ENCODE measurements at regions of chr6 and their contacts with region 1.

Region 1: GRCh38 chr6:29942275-29943052 is at the start of gene HLA-A:
- DNase-seq: peak; percentile 79
- ATAC-seq: peak; percentile 90
- H3K4me3 Mint-ChIP-seq: peak within 1 kb of the TSS; percentile 92
- H3K27ac Mint-ChIP-seq: peak within 1 kb of the TSS; percentile 100
- H3K4me1 Mint-ChIP-seq: peaks cover 69% of the 10 kb centered on the region
- H3K27me3 Mint-ChIP-seq: no peaks in the 10 kb centered on the region
- CTCF ChIP-seq: no peak
- total RNA-seq, gene HLA-A: 1,592 and 1,608 TPM in 2 replicates

Region 2: GRCh38 chr6:29752451-29753308 is 189.8 kb before region 1 on chr6:
- CTCF ChIA-PET with region 1: no interaction called
- POLR2A ChIA-PET with region 1: interaction called, 4 read pairs
- intact Hi-C with region 1: loop called (anchors 1 kb)
- DNase-seq: peak; percentile 80
- ATAC-seq: peak; percentile 68
- H3K4me3 Mint-ChIP-seq: peak overlapping the region; percentile 96
- H3K27ac Mint-ChIP-seq: peak overlapping the region; percentile 94
- H3K4me1 Mint-ChIP-seq: peaks cover 38% of the 10 kb centered on the region
- H3K27me3 Mint-ChIP-seq: no peaks in the 10 kb centered on the region
- CTCF ChIP-seq: no peak

Region 3: GRCh38 chr6:29926413-29927274 is 15.8 kb before region 1 on chr6:
- CTCF ChIA-PET with region 1: no interaction called
- POLR2A ChIA-PET with region 1: interaction called, 21 read pairs
- intact Hi-C with region 1: loop called (anchors 2 kb)
- DNase-seq: peak; percentile 50
- ATAC-seq: peak; percentile 77
- H3K4me3 Mint-ChIP-seq: peak overlapping the region; percentile 90
- H3K27ac Mint-ChIP-seq: peak overlapping the region; percentile 94
- H3K4me1 Mint-ChIP-seq: peaks cover 16% of the 10 kb centered on the region
- H3K27me3 Mint-ChIP-seq: no peaks in the 10 kb centered on the region
- CTCF ChIP-seq: no peak

Region 4: DNA sequence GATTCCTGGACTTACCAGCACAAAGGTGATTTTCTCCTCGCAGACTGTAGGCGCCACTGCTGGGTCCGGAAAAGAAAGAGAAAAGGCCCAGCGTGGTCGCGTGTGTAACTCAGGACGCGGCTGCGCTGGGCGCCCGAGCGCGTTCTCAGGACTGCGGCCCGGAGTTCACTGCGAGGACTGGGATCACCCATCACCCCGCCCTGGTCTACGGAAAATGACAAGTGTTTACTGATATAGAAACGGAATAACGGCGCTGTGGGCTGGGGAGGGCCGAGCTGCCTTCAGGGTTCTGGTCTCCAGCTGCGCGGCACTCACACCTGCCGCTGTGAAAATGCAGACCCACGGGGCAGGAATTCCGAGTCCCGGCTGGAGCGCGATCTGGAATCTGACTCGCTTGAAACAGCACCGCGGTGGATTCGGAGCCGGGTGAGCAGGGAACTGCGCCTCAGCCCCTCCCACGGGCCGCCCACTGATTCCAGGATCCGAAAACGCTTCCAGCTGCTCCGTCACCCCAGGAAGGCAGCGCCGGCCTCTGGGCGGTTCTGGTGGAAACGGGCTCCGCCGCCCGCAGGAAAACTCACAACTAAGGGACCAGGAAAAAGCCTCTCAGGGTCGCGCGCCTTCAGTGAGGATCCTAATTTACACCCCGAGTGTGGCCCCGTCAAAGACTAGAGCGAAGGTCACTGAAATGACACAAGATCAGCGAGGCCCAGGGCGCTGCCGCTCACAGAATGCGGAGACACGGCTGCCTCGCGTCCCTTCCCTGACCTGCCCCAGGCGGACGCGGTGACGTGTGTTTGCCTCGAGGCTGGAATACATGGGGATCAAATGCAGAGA is 34.3 kb after region 1 on chr6:
- CTCF ChIA-PET with region 1: no interaction called
- POLR2A ChIA-PET with region 1: interaction called, 5 read pairs
- intact Hi-C with region 1: loop called (anchors 5 kb)
- DNase-seq: peak; percentile 45
- ATAC-seq: peak; percentile 87
- H3K4me3 Mint-ChIP-seq: peak overlapping the region; percentile 91
- H3K27ac Mint-ChIP-seq: peak overlapping the region; percentile 26
- H3K4me1 Mint-ChIP-seq: peaks cover 33% of the 10 kb centered on the region
- H3K27me3 Mint-ChIP-seq: peaks cover 47% of the 10 kb centered on the region
- CTCF ChIP-seq: no peak

Region 5: DNA sequence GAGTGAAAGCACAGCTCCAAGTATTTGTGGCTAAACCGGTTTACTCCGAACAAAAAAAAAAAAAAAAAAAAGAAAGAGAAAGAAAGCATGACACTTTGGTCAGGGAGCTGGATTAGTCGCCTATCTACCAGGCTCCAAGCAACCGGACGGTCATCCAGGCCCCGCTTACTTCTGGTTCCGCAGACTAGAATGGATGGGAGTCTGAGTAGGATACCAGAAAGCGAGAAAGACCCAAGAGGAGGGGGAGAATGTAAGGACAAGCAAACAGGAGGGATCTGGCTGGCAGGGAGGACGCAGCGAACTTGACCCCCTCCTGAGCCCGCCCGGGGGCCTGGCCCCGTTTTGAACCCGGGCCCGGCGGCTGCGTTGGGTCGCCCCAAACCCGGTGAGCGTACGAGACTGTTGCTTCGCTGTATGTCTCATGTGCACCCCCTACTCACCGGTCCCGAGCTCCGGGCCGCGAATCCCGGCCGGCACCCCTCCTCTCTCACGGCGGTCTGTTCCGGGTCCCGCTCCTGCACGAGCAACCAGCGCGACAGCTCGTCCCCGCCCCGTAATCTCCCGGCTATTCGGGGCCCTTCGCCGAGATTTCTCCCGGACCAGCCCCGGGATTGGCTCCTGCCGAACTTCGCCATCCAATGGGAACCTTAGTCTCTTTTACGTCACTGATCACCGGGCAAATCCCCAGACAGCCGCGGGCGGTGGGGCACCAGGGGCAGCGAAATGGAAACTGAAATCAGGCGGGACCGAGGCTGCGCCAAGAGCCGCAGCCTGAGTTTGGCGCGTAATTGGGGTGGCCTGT is 270.6 kb after region 1 on chr6 and contains the start of gene TRIM26:
- CTCF ChIA-PET with region 1: no interaction called
- POLR2A ChIA-PET with region 1: no interaction called
- intact Hi-C with region 1: loop called (anchors 5 kb)
- DNase-seq: peak; percentile 89
- ATAC-seq: peak; percentile 85
- H3K4me3 Mint-ChIP-seq: peak within 1 kb of the TSS; percentile 98
- H3K27ac Mint-ChIP-seq: peak within 1 kb of the TSS; percentile 99
- H3K4me1 Mint-ChIP-seq: peaks cover 61% of the 10 kb centered on the region
- H3K27me3 Mint-ChIP-seq: no peaks in the 10 kb centered on the region
- CTCF ChIP-seq: no peak
- total RNA-seq, gene TRIM26: 72.5 and 75.7 TPM in 2 replicates